Activated CD8-positive, alpha-beta T cell treated with anti-CD3 and anti-CD28 coated beads for 36 hours (primary cell): ENCODE measurements at regions of chr15 and their contacts with region 1.

Region 1: GRCh38 chr15:101188637-101189408 is 63.0 kb downstream of the CHSY1 start:
- DNase-seq: no peak
- ATAC-seq: peak; percentile 70
- H3K4me3 Mint-ChIP-seq: peak overlapping the region; percentile 18
- H3K27ac Mint-ChIP-seq: peak overlapping the region; percentile 84
- H3K4me1 Mint-ChIP-seq: peaks cover 90% of the 10 kb centered on the region
- H3K27me3 Mint-ChIP-seq: no peaks in the 10 kb centered on the region
- CTCF ChIP-seq: no peak

Region 2: GRCh38 chr15:101078682-101079323 is 110.0 kb before region 1 on chr15:
- CTCF ChIA-PET with region 1: no interaction called
- POLR2A ChIA-PET with region 1: no interaction called
- intact Hi-C with region 1: no loop called
- DNase-seq: no peak
- ATAC-seq: no peak
- H3K4me3 Mint-ChIP-seq: no peak overlapping the region
- H3K27ac Mint-ChIP-seq: no peak overlapping the region
- H3K4me1 Mint-ChIP-seq: no peaks in the 10 kb centered on the region
- H3K27me3 Mint-ChIP-seq: no peaks in the 10 kb centered on the region
- CTCF ChIP-seq: no peak

Region 3: DNA sequence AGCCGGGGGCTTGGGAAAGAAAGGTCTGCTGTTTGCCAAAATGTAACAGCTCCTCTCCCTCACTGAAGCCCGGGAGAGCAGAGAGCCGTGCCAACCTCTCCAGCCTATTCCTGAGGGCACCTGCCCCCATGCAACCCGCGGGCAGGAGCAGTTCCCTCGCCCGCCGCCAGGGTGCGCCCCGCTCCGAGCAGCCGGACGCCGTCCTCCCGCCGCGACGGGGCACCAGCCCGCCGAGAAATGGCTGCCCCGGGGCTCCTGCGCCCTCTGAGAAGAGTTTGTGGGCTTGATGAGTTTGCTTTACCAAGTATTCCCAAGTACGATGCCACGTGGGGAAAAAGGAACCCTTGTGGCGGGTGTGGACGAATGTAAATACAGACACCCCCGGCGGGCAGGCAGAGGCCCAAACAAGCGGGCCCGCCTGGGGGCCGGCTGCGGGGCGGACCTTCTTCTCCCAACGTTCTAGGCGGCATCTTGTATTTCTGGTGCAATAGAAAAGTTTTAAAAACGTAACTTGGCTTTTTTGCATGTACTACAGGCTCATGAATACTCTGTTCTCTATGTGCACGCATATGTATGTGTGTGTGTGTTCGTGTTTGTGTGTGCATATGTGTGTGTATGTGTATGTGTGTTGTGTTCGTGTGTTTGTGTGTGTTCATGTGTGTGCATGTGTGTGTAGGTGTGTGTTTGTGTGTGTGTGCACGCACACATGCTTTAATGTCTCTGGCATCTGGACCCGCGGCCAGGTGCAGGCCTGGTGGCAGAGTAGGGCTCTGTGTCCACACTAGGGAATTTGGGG is 99.8 kb before region 1 on chr15:
- CTCF ChIA-PET with region 1: interaction called, 3 read pairs
- POLR2A ChIA-PET with region 1: no interaction called
- intact Hi-C with region 1: loop called (anchors 5 kb)
- DNase-seq: peak; percentile 83
- ATAC-seq: peak; percentile 97
- H3K4me3 Mint-ChIP-seq: no peak overlapping the region
- H3K27ac Mint-ChIP-seq: no peak overlapping the region
- H3K4me1 Mint-ChIP-seq: peaks cover 8% of the 10 kb centered on the region
- H3K27me3 Mint-ChIP-seq: no peaks in the 10 kb centered on the region
- CTCF ChIP-seq: peak; percentile 99

Region 4: GRCh38 chr15:101127506-101128076 is 61.2 kb before region 1 on chr15:
- CTCF ChIA-PET with region 1: no interaction called
- POLR2A ChIA-PET with region 1: no interaction called
- intact Hi-C with region 1: loop called (anchors 5 kb)
- DNase-seq: peak; percentile 75
- ATAC-seq: peak; percentile 71
- H3K4me3 Mint-ChIP-seq: peak overlapping the region; percentile 53
- H3K27ac Mint-ChIP-seq: peak overlapping the region; percentile 96
- H3K4me1 Mint-ChIP-seq: peaks cover 57% of the 10 kb centered on the region
- H3K27me3 Mint-ChIP-seq: no peaks in the 10 kb centered on the region
- CTCF ChIP-seq: no peak